Caco-2 (cell line): ENCODE measurements at regions of chrX and their contacts with region 1.

Region 1: DNA sequence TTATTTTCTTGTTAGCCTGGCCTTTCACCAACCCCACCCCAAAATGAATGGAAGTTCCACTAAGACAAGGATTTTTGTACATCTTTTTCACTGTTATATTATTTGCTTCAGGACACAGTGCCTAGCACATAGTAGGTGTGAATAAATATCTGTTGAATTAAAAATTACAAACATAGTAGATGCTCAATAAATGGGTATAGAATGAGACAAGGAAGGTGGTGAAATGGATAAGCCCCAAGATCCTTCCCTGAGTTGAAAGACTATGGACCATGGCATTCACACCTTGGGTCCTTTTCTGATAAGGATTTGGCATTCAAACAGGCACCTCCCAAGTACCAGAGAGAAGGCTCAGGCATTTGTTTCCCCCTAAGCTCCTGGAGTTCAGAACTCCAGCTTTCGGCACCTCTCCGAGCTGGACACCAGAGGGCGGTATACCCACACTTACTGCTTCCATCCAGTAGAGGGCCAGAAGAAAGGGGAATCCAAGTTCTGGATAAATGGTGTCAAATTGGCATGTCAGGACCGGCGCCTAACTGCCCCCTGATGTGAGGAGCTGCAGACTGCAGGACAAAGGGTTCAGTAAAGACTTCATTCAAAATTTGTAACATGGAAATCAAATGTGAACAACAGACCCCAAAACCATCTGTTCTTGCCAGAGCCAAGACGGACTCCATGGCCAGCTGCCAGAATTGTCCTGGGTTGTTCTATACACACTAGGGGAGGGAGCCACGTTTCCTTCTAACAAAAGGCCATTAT is 193.0 kb downstream of the GPC3 start:
- DNase-seq: peak; percentile 54 to 68
- H3K4me3 ChIP-seq: no peak overlapping the region
- H3K4me3 Mint-ChIP-seq: no peak overlapping the region
- H3K27ac Mint-ChIP-seq: no peak overlapping the region
- H3K4me1 ChIP-seq: no peaks in the 10 kb centered on the region
- H3K4me1 Mint-ChIP-seq: peaks cover 6% of the 10 kb centered on the region
- H3K27me3 ChIP-seq: no peaks in the 10 kb centered on the region
- H3K27me3 Mint-ChIP-seq: no peaks in the 10 kb centered on the region
- CTCF ChIP-seq: peak; percentile 96 to 98

Region 2: DNA sequence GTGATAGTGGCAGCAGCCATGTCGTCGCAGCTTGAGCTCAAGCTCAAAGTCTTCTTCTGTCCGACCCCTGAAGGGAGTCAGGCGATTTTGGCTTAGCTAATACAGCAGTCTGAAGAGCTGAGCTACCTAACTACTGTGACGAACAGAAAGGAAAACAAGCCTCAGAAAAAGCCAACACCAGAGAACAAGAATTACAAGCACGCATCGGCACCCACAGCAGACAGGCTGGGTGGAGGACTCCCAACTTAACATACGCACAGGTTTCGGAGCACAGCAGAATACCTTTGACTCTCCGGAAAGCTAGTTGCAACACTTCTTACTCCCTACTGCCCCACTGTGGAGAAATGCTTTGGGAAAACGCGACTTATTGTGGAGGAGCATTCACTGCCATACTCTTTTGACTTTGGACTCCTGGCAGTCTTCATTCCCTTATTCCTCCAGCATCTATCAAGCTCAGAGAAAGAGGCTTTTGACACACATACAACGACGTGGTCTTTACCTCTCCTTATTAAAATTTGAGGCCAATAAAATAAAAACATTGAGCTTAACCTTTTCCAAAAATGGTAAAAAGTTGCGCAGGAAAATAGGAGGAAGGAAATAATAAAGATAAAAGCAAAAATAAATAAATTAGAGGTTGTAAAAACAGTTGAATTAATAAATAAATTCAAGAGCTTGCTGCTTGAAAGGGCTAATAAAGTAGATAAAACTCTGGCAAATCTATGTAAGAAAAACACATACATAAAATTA is 234.4 kb after region 1 on chrX:
- CTCF ChIA-PET with region 1: interaction called, 19 read pairs
- POLR2A ChIA-PET with region 1: no interaction called
- intact Hi-C with region 1: loop called (anchors 1 kb)
- DNase-seq: peak; percentile 78 to 80
- H3K4me3 ChIP-seq: peak overlapping the region; percentile 16
- H3K4me3 Mint-ChIP-seq: peak overlapping the region; percentile 76
- H3K27ac Mint-ChIP-seq: peak overlapping the region; percentile 73
- H3K4me1 ChIP-seq: no peaks in the 10 kb centered on the region
- H3K4me1 Mint-ChIP-seq: peaks cover 6% of the 10 kb centered on the region
- H3K27me3 ChIP-seq: no peaks in the 10 kb centered on the region
- H3K27me3 Mint-ChIP-seq: no peaks in the 10 kb centered on the region
- CTCF ChIP-seq: peak in 1 of 2 experiments; percentile 44